Body of pancreas (tissue), 4 donors: ENCODE measurements at regions of chr15 and their contacts with region 1.

Region 1: DNA sequence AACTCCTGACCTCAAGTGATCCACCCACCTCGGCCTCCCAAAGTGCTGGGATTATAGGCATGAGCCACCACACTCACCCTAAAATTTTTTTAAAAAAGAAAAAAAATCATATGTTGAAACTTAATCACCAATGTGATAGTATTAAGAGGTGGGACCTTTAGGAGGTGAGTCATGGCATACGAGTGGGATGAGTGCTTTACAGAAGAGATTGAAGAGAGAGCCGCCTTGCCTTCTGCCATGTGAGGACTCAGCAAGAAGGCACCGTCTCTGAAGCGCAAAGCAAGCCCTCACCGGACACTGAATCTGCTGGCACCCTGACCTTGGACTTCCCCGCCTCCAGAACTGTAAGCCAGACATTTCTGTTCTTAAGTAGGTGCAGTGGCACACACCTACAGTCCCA is 5.5 kb downstream of the ARPIN start:
- DNase-seq: no peak
- ATAC-seq: no peak
- H3K4me3 ChIP-seq: no peak overlapping the region
- H3K27ac ChIP-seq: no peak overlapping the region
- H3K4me1 ChIP-seq: peaks cover 32% of the 10 kb centered on the region
- H3K27me3 ChIP-seq: no peaks in the 10 kb centered on the region
- CTCF ChIP-seq: no peak
- POLR2A ChIP-seq: no peak

Region 2: DNA sequence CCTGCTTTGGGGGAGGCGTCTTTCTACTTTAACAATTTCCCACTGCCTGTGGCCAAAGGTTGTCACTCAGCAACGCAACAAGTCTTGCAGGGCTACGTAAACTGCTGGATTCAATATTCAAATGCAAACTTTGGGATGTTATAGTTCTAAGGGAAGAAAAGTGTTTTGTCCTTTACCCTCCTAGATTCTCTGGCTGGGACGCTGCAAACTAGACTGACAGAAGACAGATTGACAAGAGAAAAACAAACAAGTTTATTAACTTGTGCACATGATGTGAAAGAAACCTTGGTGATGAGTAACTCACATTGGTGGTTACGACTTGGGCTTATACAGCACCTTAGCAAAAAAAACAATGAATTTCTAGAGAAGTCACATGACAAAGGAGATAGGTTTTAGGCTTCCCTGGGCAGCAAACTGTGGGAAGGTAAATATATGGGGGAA is 39.5 kb after region 1 on chr15:
- intact Hi-C with region 1: no loop called
- DNase-seq: no peak
- ATAC-seq: no peak
- H3K4me3 ChIP-seq: no peak overlapping the region
- H3K27ac ChIP-seq: no peak overlapping the region
- H3K4me1 ChIP-seq: no peaks in the 10 kb centered on the region
- H3K27me3 ChIP-seq: no peaks in the 10 kb centered on the region
- CTCF ChIP-seq: no peak
- POLR2A ChIP-seq: no peak

Region 3: GRCh38 chr15:89971592-89971997 is 64.3 kb after region 1 on chr15:
- intact Hi-C with region 1: loop called (anchors 10 kb)
- DNase-seq: peak; percentile 72 to 83 (median 76)
- ATAC-seq: peak; percentile 95
- H3K4me3 ChIP-seq: no peak overlapping the region
- H3K27ac ChIP-seq: no peak overlapping the region
- H3K4me1 ChIP-seq: peaks cover 7% of the 10 kb centered on the region
- H3K27me3 ChIP-seq: no peaks in the 10 kb centered on the region
- CTCF ChIP-seq: peak; percentile 42 to 82 (median 68)
- POLR2A ChIP-seq: no peak

Region 4: DNA sequence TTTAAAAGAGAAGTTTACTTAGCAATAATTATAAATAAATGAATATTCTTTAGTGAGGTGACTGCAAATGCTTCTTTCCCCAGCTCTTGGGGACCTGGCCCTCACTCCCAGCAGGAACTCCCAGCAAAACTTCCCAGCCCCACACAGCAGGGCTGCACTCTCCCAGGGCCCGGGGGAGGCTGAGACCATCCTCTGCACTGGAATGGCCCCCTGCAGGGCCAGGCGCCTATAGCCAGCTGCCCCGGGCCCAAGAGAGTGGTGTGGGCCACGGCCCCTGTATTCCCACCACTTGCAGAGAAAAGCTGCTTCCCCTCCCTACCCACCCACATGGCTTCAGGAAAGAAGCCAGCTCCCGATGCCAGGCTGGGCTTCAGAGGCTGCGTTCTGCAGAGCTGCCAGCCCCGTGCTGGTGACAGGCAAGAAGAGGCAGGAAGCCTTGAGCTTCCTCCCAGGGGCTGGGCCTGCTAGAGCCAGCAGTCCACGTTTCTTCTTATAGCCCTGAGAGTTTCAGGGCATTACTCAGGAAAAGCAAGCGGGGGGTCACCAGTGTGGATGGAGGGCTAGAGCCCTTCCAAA is 174.9 kb after region 1 on chr15:
- intact Hi-C with region 1: loop called (anchors 5 kb)
- DNase-seq: peak in 1 of 4 donors; percentile 50
- ATAC-seq: no peak
- H3K4me3 ChIP-seq: no peak overlapping the region
- H3K27ac ChIP-seq: peak overlapping the region in 1 of 4 donors; percentile 47
- H3K4me1 ChIP-seq: peaks cover 9% of the 10 kb centered on the region
- H3K27me3 ChIP-seq: no peaks in the 10 kb centered on the region
- CTCF ChIP-seq: no peak
- POLR2A ChIP-seq: no peak